Activated naive CD4-positive, alpha-beta T cell treated with anti-CD3 and anti-CD28 coated beads, Interleukin-2, amount 10 ng/mL, durations not matched to agents 7 days and 5 days (primary cell): ENCODE measurements at regions of chr11 and their contacts with region 1.

Region 1: GRCh38 chr11:96075532-96075959 is 151.6 kb upstream of the MTMR2 start:
- DNase-seq: no peak
- H3K4me3 Mint-ChIP-seq: no peak overlapping the region
- H3K27ac Mint-ChIP-seq: peak overlapping the region; percentile 24
- H3K4me1 Mint-ChIP-seq: peaks cover 34% of the 10 kb centered on the region
- H3K27me3 Mint-ChIP-seq: no peaks in the 10 kb centered on the region

Region 2: GRCh38 chr11:96054870-96055705 is 20.5 kb before region 1 on chr11:
- CTCF ChIA-PET with region 1: interaction called, 16 read pairs
- DNase-seq: no peak
- H3K4me3 Mint-ChIP-seq: no peak overlapping the region
- H3K27ac Mint-ChIP-seq: no peak overlapping the region
- H3K4me1 Mint-ChIP-seq: peaks cover 32% of the 10 kb centered on the region
- H3K27me3 Mint-ChIP-seq: no peaks in the 10 kb centered on the region